ENCODE measurements at regions of chr4 and their contacts with region 1.

Region 1: GRCh38 chr4:11698846-11699590 is 270.3 kb upstream of the HS3ST1 start:
- DNase-seq: peak; percentile 61 to 91
- H3K4me3 ChIP-seq: 0 out of 2 replicates have a peak overlapping the region, but pooled peaks have one; percentile 12
- H3K27ac ChIP-seq: peak overlapping the region; percentile 99
- H3K4me1 ChIP-seq: peaks cover 52% of the 10 kb centered on the region
- H3K27me3 ChIP-seq: no peaks in the 10 kb centered on the region
- CTCF ChIP-seq: no peak

Region 2: DNA sequence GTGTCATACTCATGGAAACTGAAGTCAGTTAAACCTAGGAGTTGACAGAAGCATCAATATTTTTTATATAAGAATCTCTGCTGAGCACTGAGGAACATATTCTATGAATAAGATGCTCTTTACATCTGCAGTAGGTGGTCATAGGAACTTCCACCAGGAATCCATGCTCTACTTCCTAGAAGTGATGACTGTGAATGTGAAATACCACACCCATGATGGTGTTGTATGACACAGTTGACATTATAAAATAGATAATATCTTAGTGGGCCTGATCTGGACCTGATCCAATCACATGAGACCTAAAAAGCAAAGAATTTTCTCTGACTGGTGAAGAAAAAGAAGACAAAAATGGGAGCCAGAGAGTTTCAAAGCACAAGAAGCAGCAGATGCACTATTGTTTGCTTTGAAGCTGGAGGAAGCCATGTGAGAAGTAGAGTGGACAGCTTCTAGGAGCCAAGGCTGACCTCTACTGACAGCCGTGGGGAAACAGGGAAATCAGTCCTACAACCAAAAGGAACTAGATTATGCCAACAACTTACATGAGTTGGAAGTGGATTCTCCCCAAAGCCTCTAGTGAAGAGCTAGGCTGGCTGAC is 201.7 kb before region 1 on chr4:
- CTCF ChIA-PET with region 1: interaction called, 3 read pairs
- POLR2A ChIA-PET with region 1: interaction called, 5 read pairs
- intact Hi-C with region 1: loop called (anchors 1 kb)
- DNase-seq: no peak
- H3K4me3 ChIP-seq: no peak overlapping the region
- H3K27ac ChIP-seq: peak overlapping the region; percentile 87
- H3K4me1 ChIP-seq: peaks cover 7% of the 10 kb centered on the region; the same call in 1 of the 2 replicates
- H3K27me3 ChIP-seq: no peaks in the 10 kb centered on the region
- CTCF ChIP-seq: 0 out of 2 replicates have a peak, but pooled peaks have one; percentile 34

Region 3: GRCh38 chr4:11548597-11549082 is 150.4 kb before region 1 on chr4:
- CTCF ChIA-PET with region 1: no interaction called
- POLR2A ChIA-PET with region 1: interaction called, 3 read pairs
- intact Hi-C with region 1: loop called (anchors 5 kb)
- DNase-seq: peak; percentile 29 to 77
- H3K4me3 ChIP-seq: 0 out of 2 replicates have a peak overlapping the region, but pooled peaks have one; percentile 10
- H3K27ac ChIP-seq: peak overlapping the region; percentile 93
- H3K4me1 ChIP-seq: peaks cover 29% of the 10 kb centered on the region
- H3K27me3 ChIP-seq: no peaks in the 10 kb centered on the region
- CTCF ChIP-seq: no peak

Region 4: DNA sequence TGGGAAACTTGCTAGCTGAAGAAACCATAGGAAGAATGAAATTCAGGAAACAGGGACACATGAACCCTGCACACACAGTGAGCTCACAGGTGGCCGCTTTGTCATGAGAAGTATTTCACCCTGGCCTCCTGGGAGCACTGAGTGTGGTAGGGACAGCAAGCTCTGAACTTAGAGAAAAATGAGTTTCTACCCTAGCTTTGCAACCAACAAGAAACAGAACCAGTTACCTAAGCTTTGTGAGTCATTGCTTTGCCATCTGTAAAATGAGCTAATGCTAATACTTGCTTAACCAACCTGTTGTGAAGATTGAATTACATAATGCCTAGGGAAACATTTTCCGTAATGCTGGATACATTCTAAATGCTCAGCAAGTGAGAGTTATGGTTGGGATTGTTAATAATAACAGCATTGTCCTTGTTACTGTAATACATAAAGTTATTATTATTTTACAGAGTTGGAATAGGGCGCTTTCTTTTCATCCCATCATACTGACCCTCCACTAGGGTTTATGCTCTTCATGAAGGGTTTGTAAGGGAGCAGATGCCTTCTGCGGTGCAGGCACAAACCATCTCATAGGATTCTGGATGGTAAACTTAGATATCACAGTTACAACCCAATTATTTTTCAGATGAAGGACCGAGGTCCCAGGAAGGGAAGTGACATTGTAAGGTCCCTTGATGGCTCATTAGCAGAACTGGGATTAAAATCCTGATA is 63.5 kb before region 1 on chr4:
- CTCF ChIA-PET with region 1: no interaction called
- POLR2A ChIA-PET with region 1: interaction called, 19 read pairs
- intact Hi-C with region 1: loop called (anchors 1 kb)
- DNase-seq: peak; percentile 71 to 97
- H3K4me3 ChIP-seq: peak overlapping the region; percentile 31; the same call in 1 of the 2 replicates
- H3K27ac ChIP-seq: peak overlapping the region; percentile 99
- H3K4me1 ChIP-seq: peaks cover 51% of the 10 kb centered on the region
- H3K27me3 ChIP-seq: no peaks in the 10 kb centered on the region
- CTCF ChIP-seq: no peak

Region 5: GRCh38 chr4:11720292-11720691 is 21.3 kb after region 1 on chr4:
- CTCF ChIA-PET with region 1: interaction called, 5 read pairs
- POLR2A ChIA-PET with region 1: no interaction called
- intact Hi-C with region 1: loop called (anchors 1 kb)
- DNase-seq: peak in 1 of 2 experiments; percentile 46
- H3K4me3 ChIP-seq: no peak overlapping the region
- H3K27ac ChIP-seq: peak overlapping the region; percentile 41; the same call in 1 of the 2 replicates
- H3K4me1 ChIP-seq: peaks cover 5% of the 10 kb centered on the region
- H3K27me3 ChIP-seq: no peaks in the 10 kb centered on the region
- CTCF ChIP-seq: peak; percentile 76